ENCODE measurements at regions of chr1 and their contacts with region 1.

Region 1: DNA sequence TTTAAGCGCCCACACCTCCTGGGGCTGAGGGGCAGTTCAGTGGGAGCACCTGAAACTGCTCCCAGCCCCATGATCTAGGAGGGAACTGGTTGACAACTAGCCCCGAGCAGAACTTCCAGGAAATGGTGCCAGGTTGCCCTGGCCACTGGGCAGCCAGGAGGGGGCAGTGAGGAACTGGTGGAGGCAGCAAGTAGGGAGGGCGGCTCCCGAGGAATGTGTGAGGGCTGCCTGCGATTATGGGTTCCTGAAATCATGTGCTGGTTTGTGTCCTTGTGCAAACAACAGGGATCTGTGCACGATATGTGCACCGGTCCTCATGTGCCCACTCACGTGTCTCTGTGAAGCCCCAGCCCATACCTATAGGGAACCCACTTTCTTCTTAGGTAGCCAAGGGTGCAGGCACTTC is 9.9 kb downstream of the GPR3 start:
- DNase-seq: no peak
- ATAC-seq: no peak
- H3K4me3 Mint-ChIP-seq: peak overlapping the region; percentile 72
- H3K27ac Mint-ChIP-seq: peak overlapping the region; percentile 91
- H3K4me1 Mint-ChIP-seq: peaks cover 53% of the 10 kb centered on the region
- H3K27me3 Mint-ChIP-seq: no peaks in the 10 kb centered on the region
- CTCF ChIP-seq: no peak

Region 2: GRCh38 chr1:27416387-27417111 is 14.2 kb after region 1 on chr1:
- CTCF ChIA-PET with region 1: interaction called, 8 read pairs
- POLR2A ChIA-PET with region 1: interaction called, 8 read pairs
- intact Hi-C with region 1: loop called (anchors 1 kb)
- DNase-seq: no peak
- ATAC-seq: peak; percentile 52
- H3K4me3 Mint-ChIP-seq: peak overlapping the region; percentile 32
- H3K27ac Mint-ChIP-seq: peak overlapping the region; percentile 89
- H3K4me1 Mint-ChIP-seq: peaks cover 55% of the 10 kb centered on the region
- H3K27me3 Mint-ChIP-seq: no peaks in the 10 kb centered on the region
- CTCF ChIP-seq: no peak

Region 3: DNA sequence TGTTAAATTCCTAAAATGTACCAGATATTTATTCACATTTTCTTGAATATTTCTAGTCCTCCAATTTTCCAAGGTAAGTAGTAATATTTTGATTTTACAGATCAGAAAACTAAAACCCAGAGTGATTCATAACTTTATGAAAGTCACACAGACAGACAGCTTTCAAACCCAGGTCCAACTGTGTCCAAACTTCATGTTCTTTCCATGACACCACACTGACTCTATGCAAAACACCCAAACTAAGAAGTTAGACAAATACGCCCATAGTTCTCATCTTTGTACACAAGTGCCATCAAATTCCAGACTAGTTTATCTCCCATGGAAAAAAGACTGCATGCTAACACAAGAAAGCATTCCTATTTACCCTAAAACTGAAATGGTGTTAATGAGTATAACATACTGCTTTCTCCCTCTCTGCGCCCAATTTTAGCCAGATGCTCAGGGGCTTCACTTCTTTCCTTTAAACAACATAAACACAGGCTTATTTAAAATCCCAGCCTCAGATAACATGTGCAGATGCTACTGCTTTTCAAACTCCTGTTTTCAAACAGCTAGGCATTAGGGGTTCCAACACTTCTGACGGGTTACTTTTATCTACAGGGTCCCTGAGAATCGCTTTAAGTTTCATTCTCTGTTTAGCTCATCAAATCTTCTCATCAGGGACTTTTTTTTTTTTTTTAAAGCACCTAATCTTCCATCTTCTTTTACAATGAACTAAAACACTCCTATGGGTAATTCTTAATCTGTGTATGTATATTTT is 43.0 kb after region 1 on chr1:
- CTCF ChIA-PET with region 1: interaction called, 11 read pairs
- POLR2A ChIA-PET with region 1: no interaction called
- intact Hi-C with region 1: no loop called
- DNase-seq: no peak
- ATAC-seq: peak; percentile 47
- H3K4me3 Mint-ChIP-seq: peak overlapping the region; percentile 66
- H3K27ac Mint-ChIP-seq: peak overlapping the region; percentile 82
- H3K4me1 Mint-ChIP-seq: peaks cover 60% of the 10 kb centered on the region
- H3K27me3 Mint-ChIP-seq: no peaks in the 10 kb centered on the region
- CTCF ChIP-seq: no peak

Region 4: DNA sequence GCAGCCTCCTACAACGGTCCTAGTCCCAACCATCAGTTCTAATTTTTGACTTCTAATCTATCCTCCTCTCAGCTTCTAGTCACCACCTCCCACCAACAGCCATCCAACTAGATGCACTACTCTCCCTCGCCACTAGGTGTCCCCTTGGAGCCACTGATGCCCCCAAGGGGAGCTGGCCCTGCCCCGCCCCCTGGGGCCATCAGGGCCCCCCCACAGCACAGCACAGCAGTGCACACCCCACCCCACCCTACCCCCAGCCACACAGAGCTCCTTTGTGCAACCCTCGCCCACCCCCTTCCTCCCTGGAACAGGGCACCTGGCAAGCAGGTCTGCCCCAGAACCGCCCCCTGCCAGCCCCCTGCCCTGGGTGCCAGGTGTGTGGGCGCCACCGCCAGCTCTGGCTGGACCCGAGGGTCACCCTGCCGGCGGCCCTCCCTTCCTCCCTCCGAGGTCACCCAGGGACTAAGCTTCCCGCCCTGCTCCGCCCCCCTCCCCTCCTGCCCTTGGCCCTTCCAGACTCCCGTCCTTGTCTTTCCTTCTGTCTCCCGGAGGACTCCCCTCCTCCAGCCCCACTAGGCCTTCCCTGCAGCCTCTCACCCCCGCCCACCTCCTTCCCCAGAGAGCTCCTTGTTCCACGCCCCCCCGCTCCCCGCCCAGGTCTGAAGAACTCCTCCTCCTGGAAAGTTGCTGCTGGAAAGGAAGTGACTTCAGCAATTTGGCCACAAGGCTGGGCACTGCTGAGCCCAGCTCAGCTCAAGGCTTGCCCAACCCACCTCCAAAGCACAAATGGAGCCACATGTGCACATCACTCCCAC is 154.6 kb after region 1 on chr1:
- CTCF ChIA-PET with region 1: interaction called, 18 read pairs
- POLR2A ChIA-PET with region 1: interaction called, 3 read pairs
- intact Hi-C with region 1: loop called (anchors 1 kb)
- DNase-seq: peak; percentile 62
- ATAC-seq: peak; percentile 84
- H3K4me3 Mint-ChIP-seq: peak overlapping the region; percentile 36
- H3K27ac Mint-ChIP-seq: peak overlapping the region; percentile 26
- H3K4me1 Mint-ChIP-seq: peaks cover 38% of the 10 kb centered on the region
- H3K27me3 Mint-ChIP-seq: no peaks in the 10 kb centered on the region
- CTCF ChIP-seq: peak; percentile 26

Region 5: GRCh38 chr1:27725374-27726173 is 323.2 kb after region 1 on chr1 and contains the start of gene FAM76A:
- CTCF ChIA-PET with region 1: no interaction called
- POLR2A ChIA-PET with region 1: no interaction called
- intact Hi-C with region 1: loop called (anchors 5 kb)
- DNase-seq: peak; percentile 98
- ATAC-seq: peak; percentile 93
- H3K4me3 Mint-ChIP-seq: peak within 1 kb of the TSS; percentile 88
- H3K27ac Mint-ChIP-seq: peak within 1 kb of the TSS; percentile 97
- H3K4me1 Mint-ChIP-seq: peaks cover 26% of the 10 kb centered on the region
- H3K27me3 Mint-ChIP-seq: no peaks in the 10 kb centered on the region
- CTCF ChIP-seq: no peak
- total RNA-seq, gene FAM76A: 14.9 and 19.3 TPM in 2 replicates

Region 6: GRCh38 chr1:27885114-27885528 is 482.8 kb after region 1 on chr1:
- CTCF ChIA-PET with region 1: no interaction called
- POLR2A ChIA-PET with region 1: no interaction called
- intact Hi-C with region 1: no loop called
- DNase-seq: no peak
- ATAC-seq: no peak
- H3K4me3 Mint-ChIP-seq: no peak overlapping the region
- H3K27ac Mint-ChIP-seq: peak overlapping the region; percentile 77
- H3K4me1 Mint-ChIP-seq: peaks cover 62% of the 10 kb centered on the region
- H3K27me3 Mint-ChIP-seq: no peaks in the 10 kb centered on the region
- CTCF ChIP-seq: no peak

Measured in activated B cell treated with CpG ODN at 0.5 μM for 24 hours (primary cell).